Activated CD4-positive, alpha-beta T cell treated with anti-CD3 and anti-CD28 coated beads for 36 hours (primary cell): ENCODE measurements at regions of chr2 and their contacts with region 1.

Region 1: GRCh38 chr2:61538200-61538919 is at the start of gene XPO1:
- DNase-seq: peak; percentile 100
- ATAC-seq: peak; percentile 85
- H3K4me3 Mint-ChIP-seq: peak within 1 kb of the TSS; percentile 95
- H3K27ac Mint-ChIP-seq: peak within 1 kb of the TSS; percentile 100
- H3K4me1 Mint-ChIP-seq: peaks cover 22% of the 10 kb centered on the region
- H3K27me3 Mint-ChIP-seq: no peaks in the 10 kb centered on the region
- total RNA-seq, gene XPO1: 187 to 214 TPM

Region 2: DNA sequence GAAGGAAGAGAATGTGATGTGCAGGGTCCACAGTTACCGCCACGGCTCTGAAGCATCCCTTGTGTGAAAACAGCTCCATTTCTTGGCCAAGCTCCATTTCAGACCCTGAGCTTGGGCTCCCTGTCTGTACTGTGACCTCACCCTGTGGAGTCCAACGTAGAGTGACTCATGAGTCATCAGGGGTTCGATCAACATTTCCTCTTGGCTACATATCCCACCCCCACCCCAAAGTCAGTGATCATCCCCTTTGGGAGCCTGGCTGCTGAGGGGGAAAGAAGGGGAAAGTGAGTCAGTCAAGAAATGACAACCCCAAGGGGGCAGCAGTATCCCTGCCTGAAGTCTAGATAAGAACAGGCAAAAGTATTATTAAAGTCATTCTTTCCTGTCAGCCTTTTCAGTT is 720.1 kb before region 1 on chr2:
- CTCF ChIA-PET with region 1: no interaction called
- POLR2A ChIA-PET with region 1: no interaction called
- intact Hi-C with region 1: loop called in 1 of 2 experiments (anchors 1 kb)
- DNase-seq: peak; percentile 76
- ATAC-seq: peak; percentile 60
- H3K4me3 Mint-ChIP-seq: peak overlapping the region; percentile 29
- H3K27ac Mint-ChIP-seq: peak overlapping the region; percentile 82
- H3K4me1 Mint-ChIP-seq: peaks cover 57% of the 10 kb centered on the region
- H3K27me3 Mint-ChIP-seq: no peaks in the 10 kb centered on the region

Region 3: GRCh38 chr2:61065715-61066709 is 472.3 kb before region 1 on chr2 and contains the start of gene SANBR:
- CTCF ChIA-PET with region 1: no interaction called
- POLR2A ChIA-PET with region 1: no interaction called
- intact Hi-C with region 1: loop called in 1 of 2 experiments (anchors 2 kb)
- DNase-seq: peak; percentile 90
- ATAC-seq: peak; percentile 99
- H3K4me3 Mint-ChIP-seq: peak within 1 kb of the TSS; percentile 80
- H3K27ac Mint-ChIP-seq: peak within 1 kb of the TSS; percentile 78
- H3K4me1 Mint-ChIP-seq: peaks cover 12% of the 10 kb centered on the region
- H3K27me3 Mint-ChIP-seq: no peaks in the 10 kb centered on the region
- total RNA-seq, gene SANBR: 2.5 to 3.0 TPM

Region 4: DNA sequence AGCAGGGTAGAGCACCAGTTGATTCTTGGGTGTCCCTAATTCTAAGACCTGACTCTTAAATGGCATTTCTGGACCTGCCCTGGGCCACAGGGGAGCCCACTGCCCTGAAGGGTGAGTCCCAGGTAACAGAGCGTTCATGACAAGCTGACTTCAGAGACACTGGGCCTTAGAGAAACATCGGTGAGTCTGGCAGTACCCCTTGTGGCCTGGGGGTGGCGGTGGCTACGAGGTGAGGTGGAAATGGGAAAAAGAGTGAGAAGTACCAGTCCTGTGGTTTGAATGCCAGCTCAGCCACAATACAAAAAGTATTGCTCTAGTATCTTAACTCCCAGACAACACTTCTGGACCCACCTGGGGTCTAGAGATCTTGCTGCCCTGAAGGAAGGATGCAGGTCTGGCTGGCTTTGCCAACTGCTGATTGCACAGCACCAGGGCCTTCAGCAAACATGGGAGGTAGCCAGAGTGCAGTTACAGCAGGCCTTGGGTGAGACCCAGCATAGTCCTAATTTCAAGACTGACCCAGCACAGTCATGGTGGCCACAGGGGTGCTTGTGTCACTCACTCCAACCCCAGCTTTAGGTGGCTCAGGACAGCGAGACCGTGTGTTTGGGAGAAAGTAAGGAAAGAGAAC is 112.0 kb before region 1 on chr2:
- CTCF ChIA-PET with region 1: interaction called, 9 read pairs
- POLR2A ChIA-PET with region 1: no interaction called
- intact Hi-C with region 1: loop called in 1 of 2 experiments (anchors 5 kb)
- DNase-seq: peak; percentile 87
- ATAC-seq: peak; percentile 96
- H3K4me3 Mint-ChIP-seq: no peak overlapping the region
- H3K27ac Mint-ChIP-seq: peak overlapping the region; percentile 87
- H3K4me1 Mint-ChIP-seq: peaks cover 65% of the 10 kb centered on the region
- H3K27me3 Mint-ChIP-seq: no peaks in the 10 kb centered on the region

Region 5: GRCh38 chr2:61694312-61695274 is 156.2 kb after region 1 on chr2:
- CTCF ChIA-PET with region 1: no interaction called
- POLR2A ChIA-PET with region 1: no interaction called
- intact Hi-C with region 1: loop called (anchors 1 kb)
- DNase-seq: peak; percentile 93
- ATAC-seq: peak; percentile 98
- H3K4me3 Mint-ChIP-seq: peak overlapping the region; percentile 80
- H3K27ac Mint-ChIP-seq: peak overlapping the region; percentile 86
- H3K4me1 Mint-ChIP-seq: peaks cover 14% of the 10 kb centered on the region
- H3K27me3 Mint-ChIP-seq: no peaks in the 10 kb centered on the region

Region 6: GRCh38 chr2:61888267-61889055 is 350.1 kb after region 1 on chr2 and contains the start of gene CCT4:
- CTCF ChIA-PET with region 1: no interaction called
- POLR2A ChIA-PET with region 1: interaction called, 3 read pairs
- intact Hi-C with region 1: loop called (anchors 1 to 5 kb)
- DNase-seq: peak; percentile 93
- ATAC-seq: peak; percentile 79
- H3K4me3 Mint-ChIP-seq: peak within 1 kb of the TSS; percentile 99
- H3K27ac Mint-ChIP-seq: peak within 1 kb of the TSS; percentile 99
- H3K4me1 Mint-ChIP-seq: peaks cover 31% of the 10 kb centered on the region
- H3K27me3 Mint-ChIP-seq: no peaks in the 10 kb centered on the region
- total RNA-seq, gene CCT4: 255 to 373 TPM

Region 7: DNA sequence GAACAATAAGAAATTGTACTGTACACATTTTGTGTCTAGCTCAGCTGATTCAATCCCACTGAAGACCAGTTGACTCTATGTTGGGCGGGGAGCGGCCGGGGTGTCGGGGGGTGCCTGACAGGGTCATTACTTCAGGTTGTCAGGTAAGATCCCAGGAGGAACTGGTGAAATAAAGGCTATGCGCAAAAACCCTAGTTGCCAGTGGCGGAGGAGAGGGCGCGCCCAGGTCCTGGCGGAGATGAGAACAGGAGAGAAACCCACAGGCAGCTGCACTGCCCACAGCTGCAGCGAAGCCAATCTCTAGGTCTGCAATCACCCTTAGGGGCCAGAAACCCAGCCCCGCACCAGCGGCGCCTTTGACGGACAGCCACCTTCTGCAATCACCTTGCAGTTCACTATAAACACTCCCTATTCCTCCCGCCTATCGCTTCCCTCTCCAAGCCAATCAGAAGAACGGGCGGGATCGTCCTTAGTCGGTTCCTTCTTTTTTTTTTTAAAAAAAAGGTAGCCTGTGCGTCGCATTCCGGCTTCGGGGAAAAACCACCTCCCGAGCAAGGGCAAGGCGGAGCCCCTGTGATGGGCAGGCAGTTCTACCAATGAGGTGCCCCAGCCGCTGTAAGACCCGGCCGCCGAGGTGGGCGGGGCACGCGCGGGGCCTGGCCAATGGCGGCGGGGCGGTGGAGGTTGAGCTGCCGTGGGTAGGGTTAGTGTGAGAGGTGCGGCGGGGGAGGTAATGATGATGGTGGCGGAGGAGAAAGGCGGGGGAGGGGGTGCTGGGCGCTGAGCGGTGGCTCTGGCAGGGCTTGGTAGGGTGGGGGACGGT is 1166.9 kb after region 1 on chr2 and contains the start of gene EHBP1:
- CTCF ChIA-PET with region 1: no interaction called
- POLR2A ChIA-PET with region 1: no interaction called
- intact Hi-C with region 1: loop called in 1 of 2 experiments (anchors 2 kb)
- DNase-seq: peak; percentile 99
- ATAC-seq: peak; percentile 95
- H3K4me3 Mint-ChIP-seq: peak within 1 kb of the TSS; percentile 79
- H3K27ac Mint-ChIP-seq: peak within 1 kb of the TSS; percentile 83
- H3K4me1 Mint-ChIP-seq: peaks cover 31% of the 10 kb centered on the region
- H3K27me3 Mint-ChIP-seq: no peaks in the 10 kb centered on the region
- total RNA-seq, gene EHBP1: 27.3 to 28.5 TPM